ENCODE measurements at regions of chr5 and their contacts with region 1.

Region 1: GRCh38 chr5:134411546-134412266 is at the start of gene CDKN2AIPNL:
- DNase-seq: peak; percentile 72
- ATAC-seq: peak; percentile 92
- H3K4me3 ChIP-seq: peak within 1 kb of the TSS; percentile 90 to 95 (median 94)
- H3K27ac ChIP-seq: peak within 1 kb of the TSS; percentile 96
- H3K4me1 ChIP-seq: peaks cover 63% of the 10 kb centered on the region
- H3K27me3 ChIP-seq: no peaks in the 10 kb centered on the region; a peak in 1 of 5 replicates
- CTCF ChIP-seq: peak; percentile 94
- EP300 ChIP-seq: peak in 1 of 2 experiments; percentile 43; a peak in 1 of 4 replicates
- POLR2A ChIP-seq: peak; percentile 85 to 90
- RAD21 ChIP-seq: peak; percentile 90
- total RNA-seq, gene CDKN2AIPNL: 46.5 and 51.2 TPM in 2 replicates

Region 2: GRCh38 chr5:134370871-134371833 is 40.6 kb before region 1 on chr5 and contains the start of gene UBE2B:
- CTCF ChIA-PET with region 1: no interaction called
- POLR2A ChIA-PET with region 1: interaction called, 6 read pairs
- in situ Hi-C with region 1: no loop called
- intact Hi-C with region 1: loop called (anchors 5 kb)
- DNase-seq: peak; percentile 99
- ATAC-seq: peak; percentile 71
- H3K4me3 ChIP-seq: peak within 1 kb of the TSS; percentile 90 to 99 (median 98)
- H3K27ac ChIP-seq: peak within 1 kb of the TSS; percentile 99
- H3K4me1 ChIP-seq: peaks cover 45% of the 10 kb centered on the region
- H3K27me3 ChIP-seq: no peaks in the 10 kb centered on the region; a peak in 1 of 5 replicates
- CTCF ChIP-seq: no peak
- EP300 ChIP-seq: peak in 1 of 2 experiments; percentile 61; a peak in 2 of 4 replicates
- POLR2A ChIP-seq: peak; percentile 62 to 75
- RAD21 ChIP-seq: no peak
- total RNA-seq, gene UBE2B: 25.2 and 56.7 TPM in 2 replicates

Region 3: GRCh38 chr5:134465816-134466240 is 54.1 kb after region 1 on chr5:
- CTCF ChIA-PET with region 1: no interaction called
- POLR2A ChIA-PET with region 1: interaction called, 86 read pairs
- in situ Hi-C with region 1: no loop called
- intact Hi-C with region 1: loop called (anchors 5 kb)
- DNase-seq: peak; percentile 73
- ATAC-seq: peak; percentile 83
- H3K4me3 ChIP-seq: peak overlapping the region; percentile 81 to 83 (median 82)
- H3K27ac ChIP-seq: peak overlapping the region; percentile 95
- H3K4me1 ChIP-seq: peaks cover 27% of the 10 kb centered on the region
- H3K27me3 ChIP-seq: peaks cover 0 to 3% of the 10 kb centered on the region in 2 experiments; a peak in 3 of 5 replicates
- CTCF ChIP-seq: no peak
- EP300 ChIP-seq: no peak; a peak in 1 of 4 replicates
- POLR2A ChIP-seq: peak; percentile 64 to 86
- RAD21 ChIP-seq: 0 out of 2 replicates have a peak, but pooled peaks have one; percentile 12

Region 4: DNA sequence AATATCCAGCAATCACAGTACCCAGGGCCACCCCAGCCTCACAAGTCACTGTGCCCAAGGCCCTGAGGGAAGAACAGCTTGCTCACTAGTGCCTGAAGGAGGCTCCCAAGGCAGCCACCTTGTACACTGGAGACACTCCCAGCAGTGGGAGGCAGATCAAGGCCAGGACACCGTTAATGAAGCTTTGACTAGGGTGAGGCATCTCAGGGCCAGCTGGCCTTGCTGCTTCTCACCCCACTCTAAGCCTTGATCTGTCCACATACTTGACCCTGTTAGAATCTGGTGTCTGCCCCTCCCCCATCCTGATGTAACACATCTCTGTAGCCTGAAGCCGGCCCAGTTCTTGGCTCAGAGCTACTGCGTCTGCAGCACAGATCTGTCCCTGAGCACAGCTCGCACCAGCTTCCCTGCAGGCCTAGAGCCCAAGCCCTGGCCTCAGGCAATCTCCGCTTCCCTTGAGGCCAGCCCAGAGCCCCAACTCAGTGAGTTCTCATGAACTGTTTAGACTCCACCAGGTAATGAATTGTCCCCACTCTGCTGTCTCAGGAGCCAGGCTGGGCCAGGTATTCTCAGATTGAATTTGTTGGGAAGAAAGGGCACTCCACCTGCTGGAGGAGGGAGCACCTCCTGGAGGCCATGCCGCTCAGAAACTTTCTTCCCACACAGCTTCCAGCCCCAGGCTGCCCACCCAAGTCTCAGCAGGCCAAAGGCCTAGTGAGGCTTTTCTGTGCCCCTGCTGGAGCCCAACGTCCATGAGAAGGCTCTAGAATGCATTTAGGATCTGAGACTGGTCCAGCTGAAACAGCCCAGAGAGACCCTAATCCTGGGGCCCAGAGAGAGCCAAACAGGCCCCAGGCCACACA is 100.3 kb after region 1 on chr5:
- CTCF ChIA-PET with region 1: interaction called, 11 read pairs
- POLR2A ChIA-PET with region 1: interaction called, 127 read pairs
- in situ Hi-C with region 1: loop called (anchors 5 kb)
- intact Hi-C with region 1: no loop called
- DNase-seq: peak; percentile 74
- ATAC-seq: peak; percentile 84
- H3K4me3 ChIP-seq: peak overlapping the region; percentile 12 to 60 (median 24); a peak in 5 of 6 replicates
- H3K27ac ChIP-seq: peak overlapping the region; percentile 71
- H3K4me1 ChIP-seq: peaks cover 73% of the 10 kb centered on the region
- H3K27me3 ChIP-seq: no peaks in the 10 kb centered on the region
- CTCF ChIP-seq: peak; percentile 77
- EP300 ChIP-seq: peak in 1 of 2 experiments; percentile 40; a peak in 1 of 4 replicates
- POLR2A ChIP-seq: peak in 1 of 2 experiments; percentile 61; a peak in 1 of 4 replicates
- RAD21 ChIP-seq: peak; percentile 57; the same call in 1 of the 2 replicates

Region 5: DNA sequence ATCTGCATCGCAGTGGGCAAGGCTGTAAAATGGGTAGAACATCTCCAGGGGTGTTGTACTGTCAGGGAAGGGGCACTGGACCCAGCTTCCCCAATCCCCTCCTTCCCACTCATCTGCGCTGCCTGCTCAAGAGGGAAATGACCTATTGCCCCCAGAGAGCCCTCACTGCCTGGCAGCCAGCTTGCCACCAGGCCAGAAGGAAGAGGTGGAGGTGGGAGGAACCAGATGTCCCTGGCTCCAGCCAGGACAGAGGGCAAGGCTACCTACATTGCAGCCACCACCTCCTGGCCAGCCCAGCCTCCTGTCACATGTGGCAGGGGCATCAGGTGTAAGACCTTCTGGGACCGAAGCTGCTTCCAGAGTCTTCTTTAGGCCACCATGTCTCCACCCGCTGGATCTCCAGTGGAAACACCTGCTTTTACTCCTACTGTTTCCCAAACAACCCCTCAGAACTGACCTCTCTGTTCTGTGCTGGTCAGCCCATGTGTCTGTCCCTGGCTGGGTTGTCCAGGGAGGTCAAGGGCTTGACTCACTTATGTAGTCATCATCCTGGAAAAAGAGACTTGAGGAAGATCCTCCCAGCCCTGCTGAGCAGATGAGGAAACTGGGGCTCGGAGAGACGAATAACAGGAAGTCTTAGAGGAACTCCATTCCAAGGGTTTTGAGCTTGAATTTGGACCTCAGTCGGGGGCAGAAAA is 156.1 kb after region 1 on chr5:
- CTCF ChIA-PET with region 1: no interaction called
- POLR2A ChIA-PET with region 1: no interaction called
- in situ Hi-C with region 1: no loop called
- intact Hi-C with region 1: no loop called
- DNase-seq: no peak
- ATAC-seq: no peak
- H3K4me3 ChIP-seq: no peak overlapping the region
- H3K27ac ChIP-seq: no peak overlapping the region
- H3K4me1 ChIP-seq: no peaks in the 10 kb centered on the region
- H3K27me3 ChIP-seq: no peaks in the 10 kb centered on the region
- CTCF ChIP-seq: no peak
- EP300 ChIP-seq: no peak
- POLR2A ChIP-seq: no peak
- RAD21 ChIP-seq: no peak

Region 6: GRCh38 chr5:134577796-134578363 is 166.2 kb after region 1 on chr5:
- CTCF ChIA-PET with region 1: interaction called, 12 read pairs
- POLR2A ChIA-PET with region 1: interaction called, 3 read pairs
- in situ Hi-C with region 1: no loop called
- intact Hi-C with region 1: loop called (anchors 5 kb)
- DNase-seq: peak; percentile 59
- ATAC-seq: peak; percentile 80
- H3K4me3 ChIP-seq: no peak overlapping the region
- H3K27ac ChIP-seq: no peak overlapping the region
- H3K4me1 ChIP-seq: no peaks in the 10 kb centered on the region
- H3K27me3 ChIP-seq: no peaks in the 10 kb centered on the region
- CTCF ChIP-seq: peak; percentile 94
- EP300 ChIP-seq: no peak
- POLR2A ChIP-seq: no peak
- RAD21 ChIP-seq: peak; percentile 85